ENCODE measurements at regions of chr9 and their contacts with region 1.

Region 1: DNA sequence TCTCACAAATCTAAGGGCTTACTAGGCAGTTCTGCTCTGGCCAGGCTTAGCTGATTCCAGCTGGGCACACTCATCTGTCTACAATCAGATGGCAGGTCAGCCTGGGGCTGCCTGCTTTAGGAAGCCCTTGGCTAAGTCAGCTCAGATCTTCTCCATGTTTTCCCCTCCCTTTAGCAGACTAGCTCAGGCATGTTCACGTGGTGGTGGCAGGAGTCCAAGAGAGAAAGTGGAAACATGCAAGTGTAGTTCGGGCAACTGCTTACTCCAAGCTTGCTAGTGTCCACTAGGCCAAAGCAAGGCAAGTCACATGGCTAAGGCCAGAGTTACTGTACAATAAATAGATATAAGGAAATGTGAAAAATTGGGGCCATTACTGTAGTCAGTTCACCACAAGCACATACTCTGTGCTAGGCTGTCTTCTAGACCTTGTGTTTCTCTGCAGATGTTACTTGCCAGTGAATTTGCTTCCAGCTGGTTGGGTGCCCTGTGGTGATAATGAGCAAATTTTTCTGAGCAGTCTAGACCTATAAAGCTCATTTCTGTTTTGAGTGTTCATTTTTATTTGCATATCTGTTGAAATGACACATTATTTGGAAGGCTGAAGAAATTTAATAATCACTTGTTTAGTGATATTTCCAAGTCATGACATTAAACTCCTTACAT is 38.3 kb downstream of the RECK start:
- DNase-seq: peak; percentile 88
- H3K4me3 ChIP-seq: no peak overlapping the region
- H3K27ac ChIP-seq: peak overlapping the region; percentile 60
- H3K27me3 ChIP-seq: no peaks in the 10 kb centered on the region
- CTCF ChIP-seq: 0 out of 2 replicates have a peak, but pooled peaks have one; percentile 3

Region 2: GRCh38 chr9:36029765-36030528 is 45.1 kb before region 1 on chr9:
- CTCF ChIA-PET with region 1: no interaction called
- POLR2A ChIA-PET with region 1: interaction called, 10 read pairs
- DNase-seq: peak; percentile 94
- H3K4me3 ChIP-seq: no peak overlapping the region
- H3K27ac ChIP-seq: peak overlapping the region; percentile 66
- H3K27me3 ChIP-seq: no peaks in the 10 kb centered on the region
- CTCF ChIP-seq: no peak

Region 3: GRCh38 chr9:36036780-36037548 is 38.0 kb before region 1 on chr9 and contains the start of gene RECK:
- CTCF ChIA-PET with region 1: no interaction called
- POLR2A ChIA-PET with region 1: interaction called, 11 read pairs
- DNase-seq: peak; percentile 68
- H3K4me3 ChIP-seq: peak within 1 kb of the TSS; percentile 89
- H3K27ac ChIP-seq: peak within 1 kb of the TSS; percentile 85
- H3K27me3 ChIP-seq: no peaks in the 10 kb centered on the region
- CTCF ChIP-seq: no peak
- polyA plus RNA-seq, gene RECK: 103 and 112 TPM in 2 replicates

Region 4: DNA sequence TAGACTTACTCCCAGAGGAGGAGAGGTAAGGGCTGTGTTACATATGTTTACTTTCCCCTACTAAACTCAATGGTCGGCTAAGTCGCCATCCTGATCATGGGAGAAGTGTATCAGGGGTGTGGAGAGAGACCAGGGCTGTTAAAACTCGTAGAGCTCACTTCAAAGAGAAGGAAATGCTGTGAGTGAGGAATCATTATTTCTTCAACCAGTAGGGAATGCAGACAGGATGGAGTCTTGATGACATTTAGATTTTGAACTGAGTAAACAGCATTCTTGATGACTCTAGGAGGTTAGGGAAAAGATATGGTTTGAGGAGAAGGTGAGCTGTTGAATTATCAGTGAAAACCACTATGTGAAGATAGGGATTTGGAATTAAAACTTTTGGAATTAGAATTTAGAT is 21.0 kb before region 1 on chr9:
- CTCF ChIA-PET with region 1: interaction called, 15 read pairs
- POLR2A ChIA-PET with region 1: interaction called, 3 read pairs
- DNase-seq: no peak
- H3K4me3 ChIP-seq: no peak overlapping the region
- H3K27ac ChIP-seq: no peak overlapping the region
- H3K27me3 ChIP-seq: no peaks in the 10 kb centered on the region
- CTCF ChIP-seq: no peak

Region 5: DNA sequence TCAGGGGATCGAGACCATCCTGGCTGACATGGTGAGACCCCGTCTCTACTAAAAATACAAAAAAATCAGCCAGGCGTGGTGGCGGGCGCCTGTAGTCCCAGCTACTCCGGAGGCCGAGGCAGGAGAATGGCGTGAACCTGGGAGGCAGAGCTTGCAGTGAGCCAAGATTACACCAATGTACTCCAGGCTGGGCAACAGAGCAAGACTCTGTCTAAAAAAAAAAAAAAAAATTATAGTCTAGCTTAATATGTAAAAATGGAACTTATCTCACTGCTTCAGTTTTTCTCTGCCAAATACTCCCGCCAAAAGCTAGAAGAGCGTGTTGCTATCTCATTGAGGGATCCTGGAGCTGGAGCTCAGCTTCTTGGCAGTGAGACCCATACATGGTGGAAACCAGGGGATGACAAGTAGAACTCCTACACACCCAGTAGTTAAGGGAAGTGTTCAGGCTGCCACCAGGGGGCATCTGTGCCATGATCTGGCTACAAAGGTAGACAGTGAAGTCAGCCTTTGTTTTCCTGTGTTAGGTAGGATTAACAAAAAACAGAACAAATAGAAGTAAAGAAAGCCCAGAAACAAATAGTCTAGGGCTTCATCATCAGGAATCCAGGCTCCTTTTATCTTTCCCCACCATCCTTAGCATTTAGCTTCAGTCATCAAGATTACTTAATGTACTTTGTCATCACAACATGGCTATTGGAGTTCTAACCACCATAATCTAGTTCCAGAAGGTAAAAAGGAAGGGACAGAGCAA is 27.9 kb after region 1 on chr9:
- CTCF ChIA-PET with region 1: interaction called, 5 read pairs
- POLR2A ChIA-PET with region 1: interaction called, 13 read pairs
- DNase-seq: no peak
- H3K4me3 ChIP-seq: no peak overlapping the region
- H3K27ac ChIP-seq: peak overlapping the region; percentile 86
- H3K27me3 ChIP-seq: no peaks in the 10 kb centered on the region
- CTCF ChIP-seq: peak; percentile 65

Region 6: DNA sequence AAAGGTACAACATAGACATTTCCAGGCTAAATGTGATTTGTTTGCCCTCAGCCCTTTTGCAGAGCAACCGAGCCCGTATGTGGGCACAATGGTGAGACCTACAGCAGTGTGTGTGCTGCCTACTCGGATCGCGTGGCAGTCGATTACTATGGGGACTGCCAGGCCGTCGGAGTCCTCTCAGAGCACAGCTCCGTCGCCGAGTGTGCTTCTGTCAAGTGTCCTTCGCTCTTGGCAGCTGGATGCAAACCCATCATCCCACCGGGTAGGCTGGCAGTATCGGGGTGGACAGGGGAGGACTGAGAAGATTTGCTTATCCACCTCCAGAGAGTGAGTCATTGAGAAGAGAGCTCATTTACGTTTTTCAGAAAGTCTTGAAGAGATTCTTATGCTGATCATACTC is 43.7 kb after region 1 on chr9:
- CTCF ChIA-PET with region 1: no interaction called
- POLR2A ChIA-PET with region 1: no interaction called
- DNase-seq: no peak
- H3K4me3 ChIP-seq: no peak overlapping the region
- H3K27ac ChIP-seq: no peak overlapping the region
- H3K27me3 ChIP-seq: no peaks in the 10 kb centered on the region
- CTCF ChIP-seq: no peak